HEK293 (cell line): ENCODE measurements at regions of chr13 and their contacts with region 1.

Region 1: GRCh38 chr13:26186118-26186870 is 35.8 kb downstream of the RNF6 start:
- H3K4me3 ChIP-seq: peak overlapping the region; percentile 29
- H3K27ac ChIP-seq: peak overlapping the region; percentile 60
- H3K4me1 ChIP-seq: no peaks in the 10 kb centered on the region
- CTCF ChIP-seq: no peak; the same call in 1 of the 2 replicates

Region 2: GRCh38 chr13:26160586-26160985 is 25.7 kb before region 1 on chr13:
- CTCF ChIA-PET with region 1: interaction called, 12 read pairs
- POLR2A ChIA-PET with region 1: no interaction called
- H3K4me3 ChIP-seq: no peak overlapping the region
- H3K27ac ChIP-seq: no peak overlapping the region
- H3K4me1 ChIP-seq: no peaks in the 10 kb centered on the region
- CTCF ChIP-seq: no peak

Region 3: DNA sequence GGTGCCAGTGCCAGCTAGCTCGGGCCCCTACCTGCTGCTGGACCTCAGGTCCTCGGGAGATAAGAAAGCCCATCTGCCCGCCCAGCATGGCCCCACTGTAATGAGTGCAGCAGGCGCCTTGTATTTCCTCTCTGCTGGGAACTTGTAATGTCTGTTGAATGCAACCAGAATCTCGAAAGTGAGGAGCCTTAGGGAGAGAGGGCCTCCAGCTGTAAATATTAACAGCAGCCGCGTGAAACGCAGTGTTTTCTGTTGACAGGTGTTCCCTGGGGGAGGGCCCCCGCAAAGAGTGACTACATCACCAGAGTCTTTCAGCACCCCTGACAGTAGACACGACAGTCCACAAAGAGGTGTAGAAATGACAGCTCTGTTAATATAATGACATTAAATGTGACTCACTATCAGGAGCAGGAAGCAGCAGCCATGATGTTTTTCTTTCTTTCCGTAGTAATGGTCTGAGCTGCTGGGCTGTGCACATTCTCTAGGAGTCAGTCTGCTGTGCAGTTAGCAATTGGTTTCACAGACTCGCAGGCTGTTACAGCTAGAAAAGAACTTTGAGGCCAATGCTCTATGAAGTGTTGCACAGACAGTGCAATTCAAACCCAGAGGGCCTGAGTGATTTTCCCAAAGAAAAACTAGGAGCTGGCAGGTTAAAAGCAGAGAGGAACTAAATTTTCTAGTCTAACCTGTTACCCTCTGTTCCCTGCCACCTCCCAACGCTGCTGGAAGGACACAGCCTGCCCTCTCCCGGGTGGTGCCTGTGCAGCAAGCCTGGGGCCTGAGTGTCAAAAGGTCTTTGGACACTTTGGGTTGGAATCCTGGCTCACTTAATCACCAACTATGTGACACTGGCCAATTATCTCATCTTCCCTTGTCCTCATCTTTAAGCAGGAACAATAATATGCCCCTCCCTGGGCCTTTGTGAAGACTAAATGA is 312.6 kb after region 1 on chr13:
- CTCF ChIA-PET with region 1: interaction called, 52 read pairs
- POLR2A ChIA-PET with region 1: interaction called, 4 read pairs
- H3K4me3 ChIP-seq: no peak overlapping the region
- H3K27ac ChIP-seq: no peak overlapping the region
- H3K4me1 ChIP-seq: no peaks in the 10 kb centered on the region
- CTCF ChIP-seq: no peak

Region 4: GRCh38 chr13:26698392-26699196 is 512.3 kb after region 1 on chr13:
- CTCF ChIA-PET with region 1: interaction called, 51 read pairs
- POLR2A ChIA-PET with region 1: interaction called, 3 read pairs
- H3K4me3 ChIP-seq: no peak overlapping the region
- H3K27ac ChIP-seq: no peak overlapping the region
- H3K4me1 ChIP-seq: no peaks in the 10 kb centered on the region
- CTCF ChIP-seq: peak; percentile 85